SK-N-SH (cell line): ENCODE measurements at regions of chr12 and their contacts with region 1.

Region 1: GRCh38 chr12:11228296-11228879 is 41.1 kb downstream of the PRB3 start:
- DNase-seq: peak; percentile 40
- H3K4me3 ChIP-seq: no peak overlapping the region; a peak in 1 of 4 replicates
- H3K27ac ChIP-seq: no peak overlapping the region
- H3K4me1 ChIP-seq: no peaks in the 10 kb centered on the region
- H3K27me3 ChIP-seq: no peaks in the 10 kb centered on the region
- CTCF ChIP-seq: peak; percentile 75
- EP300 ChIP-seq: no peak
- RAD21 ChIP-seq: peak; percentile 69

Region 2: GRCh38 chr12:10771132-10771733 is 457.2 kb before region 1 on chr12:
- CTCF ChIA-PET with region 1: interaction called, 10 read pairs
- POLR2A ChIA-PET with region 1: no interaction called
- DNase-seq: peak; percentile 22
- H3K4me3 ChIP-seq: no peak overlapping the region
- H3K27ac ChIP-seq: no peak overlapping the region
- H3K4me1 ChIP-seq: no peaks in the 10 kb centered on the region
- H3K27me3 ChIP-seq: peaks cover 25% of the 10 kb centered on the region; the same call in 1 of the 2 replicates
- CTCF ChIP-seq: peak; percentile 78
- EP300 ChIP-seq: no peak
- RAD21 ChIP-seq: peak; percentile 87